CD4-positive, alpha-beta T cell (primary cell): ENCODE measurements at regions of chr3 and their contacts with region 1.

Region 1: DNA sequence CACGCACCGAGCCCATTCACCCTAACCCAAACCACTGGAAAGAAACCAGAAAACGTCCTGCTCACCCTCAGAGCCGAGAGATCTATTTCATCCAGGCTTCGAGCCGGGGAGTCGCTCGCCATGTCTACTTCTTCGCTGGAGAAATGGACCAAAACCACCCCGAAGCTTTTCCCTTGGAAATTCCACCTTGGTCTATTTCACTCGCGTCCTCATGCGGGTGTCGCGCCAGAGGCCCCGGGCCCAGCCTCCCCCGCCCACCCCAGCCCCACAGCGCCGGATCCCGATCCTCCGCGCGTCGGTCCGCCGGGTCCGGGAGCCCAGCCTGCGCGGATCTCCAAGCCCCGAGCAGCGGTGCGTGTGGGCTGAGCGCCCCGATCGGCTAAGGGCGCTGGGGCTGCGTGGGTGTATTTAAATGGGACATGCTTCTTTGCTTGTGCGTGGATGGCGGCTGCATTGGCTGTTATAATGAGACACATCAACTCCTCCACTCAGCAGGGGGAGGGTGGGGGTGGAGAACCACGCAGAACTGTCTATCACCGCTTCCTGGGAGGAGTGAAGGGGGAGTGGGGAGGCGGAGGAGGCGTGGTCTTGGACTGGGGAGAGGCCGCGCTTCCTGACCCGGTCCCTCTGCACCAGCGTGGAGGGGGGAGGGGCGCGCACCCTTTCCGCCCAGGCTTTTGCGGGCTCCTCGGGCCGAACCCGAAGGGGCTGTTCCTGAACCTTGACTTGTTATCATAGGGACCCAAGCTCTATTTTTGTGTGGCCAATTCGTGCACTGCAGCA is at the start of gene TNIK:
- DNase-seq: peak; percentile 85 to 98 (median 93)
- ATAC-seq: peak; percentile 82
- H3K4me3 ChIP-seq: peak within 1 kb of the TSS; percentile 74
- H3K4me3 Mint-ChIP-seq: peak within 1 kb of the TSS; percentile 97
- H3K27ac ChIP-seq: peak within 1 kb of the TSS; percentile 52 to 71
- H3K27ac Mint-ChIP-seq: peak within 1 kb of the TSS; percentile 92
- H3K4me1 ChIP-seq: peaks cover 40% of the 10 kb centered on the region
- H3K4me1 Mint-ChIP-seq: peaks cover 47% of the 10 kb centered on the region
- H3K27me3 ChIP-seq: no peaks in the 10 kb centered on the region
- H3K27me3 Mint-ChIP-seq: no peaks in the 10 kb centered on the region
- CTCF ChIP-seq: peak; percentile 29
- total RNA-seq, gene TNIK: 71.0 to 78.3 TPM

Region 2: DNA sequence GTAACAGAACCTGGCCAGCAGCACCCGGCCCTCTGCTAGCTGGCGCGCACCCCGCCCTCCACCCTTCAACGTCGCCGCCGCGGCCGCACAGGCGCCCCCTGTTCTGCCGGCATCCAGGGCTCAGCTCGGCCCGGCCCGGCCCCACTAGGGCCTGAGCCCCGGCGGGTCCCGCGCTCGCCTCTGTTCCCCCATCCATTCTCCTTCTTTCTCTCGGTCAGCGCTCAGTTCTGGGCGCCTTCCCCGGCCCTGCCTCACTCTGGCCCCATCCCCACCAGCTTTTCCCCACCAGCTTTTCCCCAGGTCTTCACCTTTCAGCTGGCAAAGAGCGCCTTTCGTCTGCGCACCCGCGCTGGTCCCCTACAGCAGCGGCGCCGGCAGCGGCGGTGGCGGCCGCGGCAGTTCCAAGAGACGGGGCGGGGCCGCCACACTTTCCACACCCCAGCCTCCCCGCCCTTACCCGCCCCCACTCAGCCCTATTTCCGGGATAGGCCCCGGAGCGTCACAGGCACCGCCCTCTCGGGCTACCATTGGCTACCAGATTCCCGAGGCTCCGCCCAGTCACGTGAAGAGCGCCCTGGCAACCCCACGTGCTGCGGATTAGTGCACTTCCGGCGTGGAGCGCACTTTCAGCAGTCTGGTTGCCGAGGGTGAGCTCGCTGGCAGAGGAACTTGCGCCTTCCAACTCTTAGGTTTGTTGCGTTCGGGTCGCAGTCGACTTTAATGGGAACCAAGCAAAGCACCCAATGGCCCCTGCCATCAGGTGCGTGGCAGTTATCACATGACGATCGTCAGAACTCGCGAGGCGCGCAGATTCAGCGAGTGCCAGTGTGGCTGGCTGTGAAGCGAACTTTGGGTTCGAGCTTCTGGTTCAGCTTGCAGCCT is 551.7 kb before region 1 on chr3 and contains the start of gene EIF5A2:
- CTCF ChIA-PET with region 1: no interaction called
- POLR2A ChIA-PET with region 1: no interaction called
- intact Hi-C with region 1: loop called in 1 of 2 experiments (anchors 10 kb)
- DNase-seq: peak; percentile 92 to 98 (median 94)
- ATAC-seq: peak; percentile 94
- H3K4me3 ChIP-seq: peak within 1 kb of the TSS; percentile 66
- H3K4me3 Mint-ChIP-seq: peak within 1 kb of the TSS; percentile 99
- H3K27ac ChIP-seq: peak within 1 kb of the TSS; percentile 53 to 66
- H3K27ac Mint-ChIP-seq: peak within 1 kb of the TSS; percentile 86
- H3K4me1 ChIP-seq: peaks cover 10% of the 10 kb centered on the region
- H3K4me1 Mint-ChIP-seq: peaks cover 27% of the 10 kb centered on the region
- H3K27me3 ChIP-seq: no peaks in the 10 kb centered on the region
- H3K27me3 Mint-ChIP-seq: no peaks in the 10 kb centered on the region
- CTCF ChIP-seq: no peak
- total RNA-seq, gene EIF5A2: 10.6 to 13.7 TPM

Region 3: GRCh38 chr3:171257251-171258203 is 202.6 kb before region 1 on chr3:
- CTCF ChIA-PET with region 1: no interaction called
- POLR2A ChIA-PET with region 1: interaction called, 22 read pairs
- intact Hi-C with region 1: loop called (anchors 5 kb)
- DNase-seq: peak in 1 of 14 experiments; percentile 34
- ATAC-seq: peak; percentile 50
- H3K4me3 ChIP-seq: no peak overlapping the region
- H3K4me3 Mint-ChIP-seq: peak overlapping the region; percentile 42
- H3K27ac ChIP-seq: peak overlapping the region; percentile 61 to 78
- H3K27ac Mint-ChIP-seq: peak overlapping the region; percentile 95
- H3K4me1 ChIP-seq: peaks cover 60% of the 10 kb centered on the region
- H3K4me1 Mint-ChIP-seq: peaks cover 96% of the 10 kb centered on the region
- H3K27me3 ChIP-seq: no peaks in the 10 kb centered on the region
- H3K27me3 Mint-ChIP-seq: no peaks in the 10 kb centered on the region
- CTCF ChIP-seq: no peak

Region 4: DNA sequence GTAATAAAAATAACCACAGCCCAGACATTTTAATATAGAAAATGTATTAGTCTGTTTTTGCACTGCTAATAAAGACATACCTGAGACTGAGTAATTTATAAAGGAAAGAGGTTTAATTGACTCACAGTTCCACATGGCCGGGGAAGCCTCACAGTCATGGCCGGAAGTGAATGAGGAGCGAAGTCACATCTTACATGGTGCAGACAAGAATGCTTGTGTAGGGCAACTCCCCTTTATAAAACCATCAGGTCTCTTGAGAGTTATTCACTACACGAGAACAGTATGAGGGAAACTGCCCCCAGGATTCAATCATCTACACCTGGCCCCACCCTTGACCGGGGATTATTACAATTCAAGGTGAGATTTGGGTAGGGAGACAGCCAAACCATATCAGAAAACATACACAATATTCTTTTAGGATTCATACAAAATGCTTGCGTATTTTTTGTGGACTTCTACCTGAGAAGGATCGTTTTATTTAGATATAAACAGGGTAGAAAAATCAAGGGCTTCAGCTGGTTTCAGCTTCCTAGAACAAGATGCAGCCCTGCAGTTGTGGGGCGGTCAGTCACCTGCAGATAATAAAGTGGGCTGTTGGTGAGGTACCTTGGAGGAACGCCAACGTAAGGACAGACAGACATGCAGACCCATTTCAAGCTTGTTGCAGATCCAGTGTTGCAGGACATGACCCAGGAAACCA is 101.8 kb before region 1 on chr3:
- CTCF ChIA-PET with region 1: no interaction called
- POLR2A ChIA-PET with region 1: no interaction called
- intact Hi-C with region 1: no loop called
- DNase-seq: no peak
- ATAC-seq: no peak
- H3K4me3 ChIP-seq: no peak overlapping the region
- H3K4me3 Mint-ChIP-seq: no peak overlapping the region
- H3K27ac ChIP-seq: no peak overlapping the region
- H3K27ac Mint-ChIP-seq: no peak overlapping the region
- H3K4me1 ChIP-seq: peaks cover 6% of the 10 kb centered on the region
- H3K4me1 Mint-ChIP-seq: peaks cover 99% of the 10 kb centered on the region
- H3K27me3 ChIP-seq: no peaks in the 10 kb centered on the region
- H3K27me3 Mint-ChIP-seq: no peaks in the 10 kb centered on the region
- CTCF ChIP-seq: no peak

Region 5: GRCh38 chr3:171447338-171447760 is 12.8 kb before region 1 on chr3:
- CTCF ChIA-PET with region 1: no interaction called
- POLR2A ChIA-PET with region 1: interaction called, 10 read pairs
- intact Hi-C with region 1: no loop called
- DNase-seq: no peak
- ATAC-seq: no peak
- H3K4me3 ChIP-seq: no peak overlapping the region
- H3K4me3 Mint-ChIP-seq: no peak overlapping the region
- H3K27ac ChIP-seq: no peak overlapping the region
- H3K27ac Mint-ChIP-seq: no peak overlapping the region
- H3K4me1 ChIP-seq: peaks cover 21% of the 10 kb centered on the region
- H3K4me1 Mint-ChIP-seq: peaks cover 63% of the 10 kb centered on the region
- H3K27me3 ChIP-seq: no peaks in the 10 kb centered on the region
- H3K27me3 Mint-ChIP-seq: no peaks in the 10 kb centered on the region
- CTCF ChIP-seq: no peak

Region 6: GRCh38 chr3:171491361-171491760 is 31.2 kb after region 1 on chr3:
- CTCF ChIA-PET with region 1: interaction called, 9 read pairs
- POLR2A ChIA-PET with region 1: interaction called, 43 read pairs
- intact Hi-C with region 1: loop called in 1 of 2 experiments (anchors 2 kb)
- DNase-seq: peak in 3 of 14 experiments; percentile 31 to 78 (median 47)
- ATAC-seq: peak; percentile 35
- H3K4me3 ChIP-seq: peak overlapping the region; percentile 19
- H3K4me3 Mint-ChIP-seq: peak overlapping the region; percentile 55
- H3K27ac ChIP-seq: no peak overlapping the region
- H3K27ac Mint-ChIP-seq: peak overlapping the region; percentile 65
- H3K4me1 ChIP-seq: peaks cover 32% of the 10 kb centered on the region
- H3K4me1 Mint-ChIP-seq: peaks cover 52% of the 10 kb centered on the region
- H3K27me3 ChIP-seq: no peaks in the 10 kb centered on the region
- H3K27me3 Mint-ChIP-seq: no peaks in the 10 kb centered on the region
- CTCF ChIP-seq: no peak

Region 7: DNA sequence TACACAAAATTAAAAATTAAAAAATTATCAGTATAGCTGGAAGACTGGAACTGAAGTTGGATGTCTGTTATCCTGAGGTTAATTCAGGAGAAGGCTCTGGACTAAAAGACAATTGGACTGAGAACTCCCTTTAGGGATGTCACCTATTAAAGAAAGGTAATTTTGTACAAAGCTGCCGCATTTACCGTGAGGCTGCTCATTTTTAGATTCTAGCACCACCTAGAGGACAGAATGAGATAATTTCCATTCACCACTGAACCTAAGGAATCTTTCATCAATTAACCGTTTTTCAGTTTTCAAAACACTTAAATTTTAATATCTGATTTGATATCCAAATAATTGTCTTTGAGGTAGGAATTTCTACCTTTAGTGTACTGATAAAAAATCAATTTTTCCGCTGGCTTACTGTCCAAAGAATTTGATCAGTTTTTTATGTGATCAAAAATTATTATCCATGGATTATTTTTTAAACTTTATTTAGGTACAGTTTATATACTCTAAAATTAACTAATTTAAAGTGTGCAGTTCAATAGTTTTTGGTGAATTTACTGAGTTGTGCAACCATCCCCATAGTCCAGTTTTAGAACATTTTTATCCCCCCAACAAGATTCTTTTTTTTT is 106.8 kb after region 1 on chr3:
- CTCF ChIA-PET with region 1: interaction called, 3 read pairs
- POLR2A ChIA-PET with region 1: interaction called, 23 read pairs
- intact Hi-C with region 1: loop called (anchors 5 kb)
- DNase-seq: peak in 4 of 14 experiments; percentile 7 to 77 (median 70)
- ATAC-seq: peak; percentile 62
- H3K4me3 ChIP-seq: no peak overlapping the region
- H3K4me3 Mint-ChIP-seq: no peak overlapping the region
- H3K27ac ChIP-seq: no peak overlapping the region
- H3K27ac Mint-ChIP-seq: no peak overlapping the region
- H3K4me1 ChIP-seq: no peaks in the 10 kb centered on the region
- H3K4me1 Mint-ChIP-seq: peaks cover 4% of the 10 kb centered on the region
- H3K27me3 ChIP-seq: no peaks in the 10 kb centered on the region
- H3K27me3 Mint-ChIP-seq: peaks cover 9% of the 10 kb centered on the region
- CTCF ChIP-seq: peak; percentile 83